PC-9 (cell line): ENCODE measurements at regions of chr2 and their contacts with region 1.

Region 1: DNA sequence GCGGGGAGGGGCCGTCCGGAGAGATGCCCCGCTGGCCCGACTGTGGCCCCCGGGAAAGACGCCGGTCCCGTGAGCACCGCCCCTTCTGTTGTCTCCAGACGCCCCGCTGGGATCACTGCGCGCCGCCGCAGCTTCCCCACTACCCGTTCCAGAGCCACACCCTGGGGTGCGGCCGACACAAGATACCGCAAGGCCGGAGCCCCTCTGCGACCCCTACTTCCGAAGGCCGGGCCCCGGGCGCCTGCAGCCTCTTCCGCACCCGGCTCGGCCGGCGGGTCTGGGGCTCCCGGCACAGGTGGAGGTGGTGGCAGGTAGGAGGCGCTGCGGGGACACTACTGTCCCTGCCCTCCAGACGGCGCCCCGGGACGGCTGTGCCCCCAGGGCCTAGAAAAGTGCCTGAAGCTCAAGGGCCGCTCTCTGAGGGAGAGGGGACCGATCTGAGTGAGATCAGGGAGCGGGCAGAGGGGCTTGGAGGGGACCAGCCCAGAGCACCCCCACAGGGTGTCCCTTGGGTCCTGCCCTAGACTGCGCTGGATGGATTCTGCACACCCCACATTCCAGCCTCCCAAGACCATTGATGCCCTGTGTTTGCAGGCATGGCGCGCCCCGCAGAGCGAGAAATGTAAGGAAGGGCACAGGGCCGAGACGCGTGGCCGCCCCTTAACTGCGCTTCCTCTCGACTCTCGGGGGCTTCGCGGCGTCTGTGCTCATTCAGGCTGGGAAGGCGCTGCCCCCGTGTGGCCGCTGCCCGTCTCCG is 80.0 kb downstream of the GFPT1 start:
- DNase-seq: peak; percentile 58 to 72
- H3K4me3 ChIP-seq: peak overlapping the region; percentile 73
- H3K27ac ChIP-seq: no peak overlapping the region
- H3K4me1 ChIP-seq: peaks cover 9% of the 10 kb centered on the region; the same call in 1 of the 2 replicates
- H3K27me3 ChIP-seq: peaks cover 17% of the 10 kb centered on the region
- CTCF ChIP-seq: peak; percentile 83

Region 2: DNA sequence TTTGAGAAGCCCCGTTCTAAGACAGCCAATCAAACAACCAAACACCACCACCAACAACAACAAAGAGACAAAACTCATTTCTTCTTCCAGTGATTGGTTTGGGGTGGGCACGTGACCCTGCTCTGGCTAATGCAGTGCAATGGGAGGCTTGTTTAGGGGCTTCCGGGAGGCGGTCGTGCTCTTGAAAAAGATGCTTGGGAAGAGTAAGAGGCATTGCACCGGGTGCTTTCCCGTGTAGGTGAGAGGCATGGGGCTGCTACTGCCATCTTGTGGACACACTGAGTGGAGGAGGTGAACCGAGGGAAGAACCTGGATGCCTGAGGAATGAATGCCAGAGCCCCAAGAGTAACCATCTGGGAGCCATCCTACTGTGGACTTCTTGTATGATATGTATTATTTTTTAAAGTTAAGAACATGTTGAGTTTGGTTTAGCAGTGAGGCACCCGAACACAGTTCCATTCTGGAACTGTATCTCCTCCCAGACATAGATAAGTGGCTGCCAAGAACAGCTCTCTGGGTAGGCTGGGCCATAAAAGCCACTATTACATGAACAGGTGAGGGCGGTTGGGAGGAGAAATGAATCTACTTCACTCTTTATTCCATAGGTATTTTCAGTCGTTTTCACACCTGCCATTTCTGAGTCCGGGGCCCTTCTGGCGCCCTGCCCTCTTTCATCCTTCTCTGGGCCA is 591.5 kb before region 1 on chr2:
- CTCF ChIA-PET with region 1: no interaction called
- POLR2A ChIA-PET with region 1: no interaction called
- intact Hi-C with region 1: loop called (anchors 10 kb)
- DNase-seq: peak in 1 of 2 experiments; percentile 37
- H3K4me3 ChIP-seq: no peak overlapping the region
- H3K27ac ChIP-seq: no peak overlapping the region
- H3K4me1 ChIP-seq: no peaks in the 10 kb centered on the region
- H3K27me3 ChIP-seq: no peaks in the 10 kb centered on the region
- CTCF ChIP-seq: peak; percentile 69

Region 3: DNA sequence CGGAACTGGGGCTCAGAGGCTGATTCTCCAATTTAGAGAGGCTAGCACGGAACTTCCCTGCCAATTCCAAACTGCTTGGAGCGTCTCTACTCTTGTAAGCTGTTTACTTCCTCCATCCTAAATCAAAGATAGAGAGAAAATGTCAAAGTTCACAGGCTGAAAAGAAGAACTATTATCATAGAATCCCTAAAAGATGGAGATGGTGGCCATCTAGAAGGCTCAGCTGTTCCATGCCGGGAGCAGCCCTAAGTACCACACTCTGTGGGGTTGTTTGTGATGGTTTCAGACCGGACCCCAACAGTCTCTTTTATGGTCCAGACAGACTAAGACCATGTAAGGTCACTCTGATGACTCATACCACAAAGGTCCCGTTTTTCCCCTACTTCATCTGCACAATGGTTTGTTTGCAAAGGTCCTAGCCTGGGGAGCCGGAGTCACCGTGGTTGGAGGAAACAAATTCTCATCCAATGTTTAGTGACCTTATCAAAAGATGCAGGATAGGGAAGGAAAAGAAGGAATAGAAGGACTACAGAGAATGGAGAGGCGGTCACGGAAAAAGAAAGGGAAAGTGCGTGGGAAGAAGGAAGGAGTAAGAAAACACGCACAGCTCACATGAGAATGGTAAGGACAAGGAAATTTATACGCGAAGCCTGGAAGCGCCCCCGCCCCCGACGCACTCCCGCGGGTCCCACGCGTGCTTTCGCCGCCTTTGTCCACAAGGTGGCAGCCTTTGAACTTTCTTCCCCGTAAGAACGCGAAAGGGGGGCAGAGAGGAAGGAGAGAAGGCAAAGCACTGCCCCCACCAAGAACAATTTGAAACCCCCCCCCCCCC is 294.5 kb before region 1 on chr2:
- CTCF ChIA-PET with region 1: interaction called, 4 read pairs
- POLR2A ChIA-PET with region 1: no interaction called
- intact Hi-C with region 1: loop called (anchors 1 kb)
- DNase-seq: peak in 1 of 2 experiments; percentile 57
- H3K4me3 ChIP-seq: peak overlapping the region; percentile 98
- H3K27ac ChIP-seq: no peak overlapping the region
- H3K4me1 ChIP-seq: peaks cover 15% of the 10 kb centered on the region
- H3K27me3 ChIP-seq: no peaks in the 10 kb centered on the region
- CTCF ChIP-seq: peak; percentile 86

Region 4: GRCh38 chr2:69082430-69082997 is 224.5 kb before region 1 on chr2:
- CTCF ChIA-PET with region 1: no interaction called
- POLR2A ChIA-PET with region 1: no interaction called
- intact Hi-C with region 1: loop called (anchors 1 kb)
- DNase-seq: peak; percentile 67 to 78
- H3K4me3 ChIP-seq: no peak overlapping the region
- H3K27ac ChIP-seq: 0 out of 2 replicates have a peak overlapping the region, but pooled peaks have one; percentile 21
- H3K4me1 ChIP-seq: peaks cover 18% of the 10 kb centered on the region
- H3K27me3 ChIP-seq: no peaks in the 10 kb centered on the region
- CTCF ChIP-seq: no peak

Region 5: DNA sequence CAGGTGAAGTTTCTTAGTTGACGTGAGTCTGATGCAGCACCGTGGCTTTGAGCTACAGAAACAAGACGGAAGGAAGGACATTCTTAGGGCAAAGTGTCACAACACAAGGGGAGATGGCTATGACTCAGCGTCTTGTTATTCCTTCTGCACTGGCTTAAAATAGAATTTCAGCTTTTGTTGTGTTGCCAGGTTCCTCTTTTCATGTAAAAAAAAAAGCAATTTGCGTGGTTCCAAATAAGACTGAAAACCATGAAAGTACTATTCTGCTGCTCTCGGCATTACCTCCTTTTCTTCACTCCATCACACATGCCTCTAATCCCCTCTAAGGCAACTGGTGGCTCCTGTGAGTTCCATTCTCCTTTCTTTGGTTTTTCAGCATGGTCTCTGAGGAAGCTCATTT is 143.9 kb before region 1 on chr2:
- CTCF ChIA-PET with region 1: interaction called, 4 read pairs
- POLR2A ChIA-PET with region 1: interaction called, 5 read pairs
- intact Hi-C with region 1: loop called (anchors 2 kb)
- DNase-seq: peak; percentile 33 to 81
- H3K4me3 ChIP-seq: 0 out of 2 replicates have a peak overlapping the region, but pooled peaks have one; percentile 14
- H3K27ac ChIP-seq: peak overlapping the region; percentile 43
- H3K4me1 ChIP-seq: peaks cover 22% of the 10 kb centered on the region
- H3K27me3 ChIP-seq: no peaks in the 10 kb centered on the region
- CTCF ChIP-seq: no peak